PC-3 (cell line): ENCODE measurements at regions of chr14 and their contacts with region 1.

Region 1: GRCh38 chr14:22852940-22853767 is 16.8 kb downstream of the MMP14 start:
- DNase-seq: peak; percentile 93
- ATAC-seq: peak; percentile 68
- H3K4me3 ChIP-seq: peak overlapping the region; percentile 68
- H3K27ac ChIP-seq: peak overlapping the region; percentile 97
- H3K4me1 ChIP-seq: peaks cover 40% of the 10 kb centered on the region
- H3K27me3 ChIP-seq: no peaks in the 10 kb centered on the region
- CTCF ChIP-seq: peak; percentile 94

Region 2: DNA sequence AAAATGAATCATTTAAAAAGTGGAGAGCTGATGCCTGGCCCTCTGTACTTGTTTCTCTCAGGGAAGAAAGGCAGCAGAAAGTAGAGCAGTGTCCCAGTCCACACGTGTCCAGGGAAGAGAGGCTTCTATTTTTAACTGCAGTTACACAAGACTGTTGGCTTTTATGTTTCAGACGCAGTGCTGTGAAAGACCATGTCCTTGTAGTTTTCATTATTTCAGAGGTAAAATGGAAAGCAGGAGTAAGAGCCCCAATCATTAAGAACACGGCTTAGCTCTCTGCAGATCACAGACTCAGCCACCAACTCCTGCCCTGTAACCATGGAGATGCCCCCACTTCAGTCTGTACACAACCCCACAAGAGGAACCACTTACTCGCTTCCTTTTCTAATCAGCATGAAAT is 600.5 kb before region 1 on chr14:
- CTCF ChIA-PET with region 1: no interaction called
- POLR2A ChIA-PET with region 1: no interaction called
- intact Hi-C with region 1: no loop called
- DNase-seq: no peak
- ATAC-seq: no peak
- H3K4me3 ChIP-seq: no peak overlapping the region
- H3K27ac ChIP-seq: no peak overlapping the region
- H3K4me1 ChIP-seq: peaks cover 30% of the 10 kb centered on the region
- H3K27me3 ChIP-seq: no peaks in the 10 kb centered on the region
- CTCF ChIP-seq: no peak

Region 3: DNA sequence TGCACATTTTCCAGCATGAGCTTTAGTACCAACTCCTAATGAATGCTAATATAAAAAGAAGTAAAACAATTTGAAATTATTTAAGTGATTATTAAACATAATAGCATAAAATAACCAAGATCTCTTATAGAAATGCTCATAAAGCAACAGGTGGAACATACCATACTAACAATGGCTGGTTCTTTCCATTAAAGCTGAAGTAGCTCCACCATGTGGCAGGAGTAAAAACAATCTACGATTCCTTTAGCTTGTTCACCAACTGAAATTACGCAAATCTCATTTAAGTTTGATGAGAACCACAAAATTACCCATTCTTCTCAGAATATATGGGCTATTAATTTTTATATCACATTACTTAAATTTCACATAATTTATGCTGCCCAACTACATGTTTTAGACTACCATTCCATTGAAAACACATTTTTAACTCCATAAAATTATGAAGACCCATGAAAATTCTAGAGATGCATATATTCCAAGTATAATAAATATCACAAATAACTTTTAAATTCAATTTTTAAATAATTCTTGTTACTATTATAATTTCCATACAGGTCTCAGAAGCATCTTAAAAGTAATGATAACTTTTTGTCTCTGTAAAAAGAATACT is 477.7 kb before region 1 on chr14:
- CTCF ChIA-PET with region 1: no interaction called
- POLR2A ChIA-PET with region 1: interaction called, 14 read pairs
- intact Hi-C with region 1: no loop called
- DNase-seq: peak; percentile 87
- ATAC-seq: peak; percentile 56; the same call in 1 of the 2 replicates
- H3K4me3 ChIP-seq: no peak overlapping the region
- H3K27ac ChIP-seq: no peak overlapping the region
- H3K4me1 ChIP-seq: peaks cover 26% of the 10 kb centered on the region
- H3K27me3 ChIP-seq: no peaks in the 10 kb centered on the region
- CTCF ChIP-seq: peak; percentile 85

Region 4: GRCh38 chr14:22556990-22557623 is 296.0 kb before region 1 on chr14:
- CTCF ChIA-PET with region 1: interaction called, 5 read pairs
- POLR2A ChIA-PET with region 1: no interaction called
- intact Hi-C with region 1: loop called (anchors 1 kb)
- DNase-seq: peak; percentile 78
- ATAC-seq: peak; percentile 66
- H3K4me3 ChIP-seq: peak overlapping the region; percentile 57
- H3K27ac ChIP-seq: peak overlapping the region; percentile 94
- H3K4me1 ChIP-seq: peaks cover 51% of the 10 kb centered on the region
- H3K27me3 ChIP-seq: no peaks in the 10 kb centered on the region
- CTCF ChIP-seq: peak; percentile 99

Region 5: DNA sequence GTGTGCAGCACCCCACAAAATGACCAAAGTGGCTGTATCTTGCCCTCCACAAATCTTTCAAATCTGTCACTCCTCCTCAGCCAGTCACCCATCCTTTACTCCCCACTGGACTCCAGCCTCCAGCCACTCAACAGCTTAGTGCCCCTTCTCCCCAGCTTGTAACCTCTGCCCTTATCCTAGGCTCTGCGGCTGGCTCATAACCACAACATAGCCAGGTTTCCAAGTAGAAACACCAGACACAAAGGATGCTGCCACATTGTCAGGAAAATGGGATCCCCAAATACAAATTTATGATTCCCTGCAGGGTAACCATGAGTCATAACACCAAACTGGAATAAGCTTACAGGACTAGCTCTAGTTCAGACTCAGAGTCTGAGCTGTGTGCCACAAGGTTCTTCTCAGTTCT is 71.6 kb before region 1 on chr14:
- CTCF ChIA-PET with region 1: interaction called, 3 read pairs
- POLR2A ChIA-PET with region 1: no interaction called
- intact Hi-C with region 1: loop called (anchors 1 kb)
- DNase-seq: peak; percentile 45
- ATAC-seq: peak; percentile 68; the same call in 1 of the 2 replicates
- H3K4me3 ChIP-seq: no peak overlapping the region
- H3K27ac ChIP-seq: no peak overlapping the region
- H3K4me1 ChIP-seq: 0 out of 2 replicates have a peak, but pooled peaks cover 4% of the 10 kb centered on the region
- H3K27me3 ChIP-seq: no peaks in the 10 kb centered on the region
- CTCF ChIP-seq: no peak

Region 6: DNA sequence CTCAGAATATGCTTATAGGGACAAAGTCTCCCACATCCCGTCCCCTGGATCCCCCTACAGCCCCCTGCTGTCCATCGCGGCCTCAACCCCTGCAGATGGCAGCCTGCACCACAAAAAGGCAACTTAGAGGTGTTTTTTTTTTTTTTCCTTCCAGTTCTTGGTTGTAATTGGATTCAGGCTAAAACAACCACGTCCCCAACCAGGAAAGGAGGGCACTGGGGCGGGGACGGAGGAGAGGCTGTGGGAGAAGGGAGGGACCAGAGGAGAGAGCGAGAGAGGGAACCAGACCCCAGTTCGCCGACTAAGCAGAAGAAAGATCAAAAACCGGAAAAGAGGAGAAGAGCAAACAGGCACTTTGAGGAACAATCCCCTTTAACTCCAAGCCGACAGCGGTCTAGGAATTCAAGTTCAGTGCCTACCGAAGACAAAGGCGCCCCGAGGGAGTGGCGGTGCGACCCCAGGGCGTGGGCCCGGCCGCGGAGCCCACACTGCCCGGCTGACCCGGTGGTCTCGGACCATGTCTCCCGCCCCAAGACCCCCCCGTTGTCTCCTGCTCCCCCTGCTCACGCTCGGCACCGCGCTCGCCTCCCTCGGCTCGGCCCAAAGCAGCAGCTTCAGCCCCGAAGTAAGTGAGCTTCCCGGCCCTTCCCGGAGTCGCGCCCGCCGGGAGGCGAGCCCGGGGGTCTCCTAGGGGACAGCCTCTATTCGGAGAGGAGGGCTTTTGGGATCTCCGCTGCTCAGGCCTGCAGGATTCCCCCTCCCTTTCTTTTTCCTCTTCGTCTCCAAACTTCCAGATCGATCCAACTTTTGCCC is 16.6 kb before region 1 on chr14 and contains the start of gene MMP14:
- CTCF ChIA-PET with region 1: interaction called, 11 read pairs
- POLR2A ChIA-PET with region 1: interaction called, 14 read pairs
- intact Hi-C with region 1: loop called (anchors 1 kb)
- DNase-seq: peak; percentile 65
- ATAC-seq: peak; percentile 79
- H3K4me3 ChIP-seq: peak within 1 kb of the TSS; percentile 93
- H3K27ac ChIP-seq: peak within 1 kb of the TSS; percentile 47
- H3K4me1 ChIP-seq: peaks cover 24% of the 10 kb centered on the region; the same call in 1 of the 2 replicates
- H3K27me3 ChIP-seq: no peaks in the 10 kb centered on the region
- CTCF ChIP-seq: peak; percentile 42
- total RNA-seq, gene MMP14: 80.4 and 85.0 TPM in 2 replicates

Region 7: GRCh38 chr14:23727566-23728335 is 874.6 kb after region 1 on chr14:
- CTCF ChIA-PET with region 1: no interaction called
- POLR2A ChIA-PET with region 1: no interaction called
- intact Hi-C with region 1: no loop called
- DNase-seq: peak; percentile 77
- ATAC-seq: peak; percentile 87
- H3K4me3 ChIP-seq: no peak overlapping the region
- H3K27ac ChIP-seq: no peak overlapping the region
- H3K4me1 ChIP-seq: no peaks in the 10 kb centered on the region; the same call in 1 of the 2 replicates
- H3K27me3 ChIP-seq: 0 out of 2 replicates have a peak, but pooled peaks cover 7% of the 10 kb centered on the region
- CTCF ChIP-seq: peak; percentile 72